ENCODE measurements at regions of chr11 and their contacts with region 1.

Region 1: GRCh38 chr11:128039140-128040021 is 548.0 kb downstream of the ETS1 start:
- DNase-seq: peak; percentile 89
- H3K4me3 Mint-ChIP-seq: peak overlapping the region; percentile 64
- H3K27ac Mint-ChIP-seq: peak overlapping the region; percentile 98
- H3K4me1 Mint-ChIP-seq: peaks cover 48% of the 10 kb centered on the region
- H3K27me3 Mint-ChIP-seq: no peaks in the 10 kb centered on the region

Region 2: GRCh38 chr11:128052912-128053641 is 13.7 kb after region 1 on chr11:
- CTCF ChIA-PET with region 1: interaction called, 44 read pairs
- POLR2A ChIA-PET with region 1: interaction called, 91 read pairs
- DNase-seq: no peak
- H3K4me3 Mint-ChIP-seq: peak overlapping the region; percentile 53
- H3K27ac Mint-ChIP-seq: peak overlapping the region; percentile 83
- H3K4me1 Mint-ChIP-seq: peaks cover 52% of the 10 kb centered on the region
- H3K27me3 Mint-ChIP-seq: no peaks in the 10 kb centered on the region

Region 3: DNA sequence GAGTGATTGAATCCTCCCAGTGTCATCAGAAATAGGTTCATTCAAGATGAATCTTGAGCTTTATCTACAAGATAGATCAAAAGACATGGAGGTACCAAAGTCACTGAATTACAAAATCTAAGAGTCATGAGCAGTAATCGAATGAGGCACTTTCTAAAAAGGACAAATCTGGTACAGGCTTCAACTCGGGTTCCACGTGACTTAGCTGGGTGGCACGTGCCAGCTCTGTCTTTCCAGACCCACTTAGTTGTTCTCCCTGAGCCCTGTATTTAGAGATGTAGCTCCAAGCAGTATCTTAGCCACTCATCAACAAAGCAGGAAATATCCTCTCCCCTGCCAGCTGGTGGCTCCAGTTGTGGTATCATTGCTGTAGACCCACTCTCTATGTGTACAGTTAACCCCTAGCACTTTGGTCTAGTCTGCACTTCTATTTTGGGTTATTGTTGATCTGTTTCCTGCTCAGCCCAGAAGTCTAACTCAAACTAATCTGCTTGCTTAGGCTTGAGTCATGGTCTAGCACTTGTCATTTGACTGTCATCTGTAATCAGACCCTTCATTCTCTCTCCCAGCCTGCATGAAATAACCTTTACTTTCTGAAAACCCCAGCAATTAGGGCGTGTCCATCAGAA is 19.3 kb after region 1 on chr11:
- CTCF ChIA-PET with region 1: interaction called, 44 read pairs
- POLR2A ChIA-PET with region 1: interaction called, 91 read pairs
- DNase-seq: no peak
- H3K4me3 Mint-ChIP-seq: no peak overlapping the region
- H3K27ac Mint-ChIP-seq: no peak overlapping the region
- H3K4me1 Mint-ChIP-seq: peaks cover 13% of the 10 kb centered on the region
- H3K27me3 Mint-ChIP-seq: no peaks in the 10 kb centered on the region

Region 4: DNA sequence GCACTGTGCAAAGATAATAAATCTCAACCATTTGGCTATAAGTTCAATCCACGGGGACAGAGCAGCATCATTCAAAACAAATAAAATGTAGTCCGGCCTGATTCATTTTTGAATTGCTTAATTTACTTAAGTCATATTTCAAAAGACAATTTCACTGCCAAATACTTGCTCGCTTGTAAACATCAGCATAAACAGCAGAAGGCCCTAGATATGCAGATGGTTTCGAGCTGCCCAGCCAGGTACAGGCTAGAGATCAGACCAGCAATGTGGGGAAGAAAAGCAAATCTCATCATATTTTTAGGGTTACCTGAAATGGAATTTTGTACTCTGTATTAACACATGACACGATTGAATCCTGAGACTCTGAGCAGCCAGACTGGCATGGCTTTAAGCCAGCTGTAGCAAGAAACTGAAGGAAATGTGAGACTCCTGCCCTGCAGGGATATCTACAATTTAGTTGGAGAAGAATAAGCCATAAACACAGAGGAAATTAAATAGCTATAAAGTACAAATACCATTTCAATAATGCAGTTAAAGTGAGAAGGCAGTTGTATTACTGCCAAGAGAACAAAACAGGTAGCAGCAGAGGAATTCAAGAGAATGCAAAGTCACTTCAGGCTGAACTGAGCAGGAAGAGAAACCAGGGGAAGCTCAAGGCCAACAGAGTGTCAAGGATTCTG is 107.7 kb after region 1 on chr11:
- CTCF ChIA-PET with region 1: interaction called, 14 read pairs
- POLR2A ChIA-PET with region 1: interaction called, 3 read pairs
- DNase-seq: no peak
- H3K4me3 Mint-ChIP-seq: no peak overlapping the region
- H3K27ac Mint-ChIP-seq: no peak overlapping the region
- H3K4me1 Mint-ChIP-seq: no peaks in the 10 kb centered on the region
- H3K27me3 Mint-ChIP-seq: peaks cover 3% of the 10 kb centered on the region

Region 5: DNA sequence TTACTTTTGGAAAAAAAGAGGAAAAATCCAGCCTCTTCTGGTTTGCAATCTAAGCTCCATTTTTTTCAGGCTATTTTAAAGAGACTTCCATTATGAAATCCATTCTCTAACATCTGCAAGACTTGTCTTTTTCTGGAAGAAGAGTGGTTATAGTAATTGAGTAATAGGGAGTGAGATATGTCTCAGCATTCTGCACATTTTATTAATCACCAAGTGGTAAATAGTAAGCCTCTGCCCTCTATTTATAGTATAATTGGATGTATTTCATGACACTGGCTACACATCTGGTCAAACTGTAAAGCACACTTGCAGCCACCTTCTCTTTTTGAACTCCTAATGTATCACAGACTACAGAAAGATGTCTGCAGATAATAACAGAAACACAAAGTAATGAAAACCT is 156.9 kb after region 1 on chr11:
- CTCF ChIA-PET with region 1: no interaction called
- POLR2A ChIA-PET with region 1: no interaction called
- DNase-seq: no peak
- H3K4me3 Mint-ChIP-seq: no peak overlapping the region
- H3K27ac Mint-ChIP-seq: no peak overlapping the region
- H3K4me1 Mint-ChIP-seq: peaks cover 34% of the 10 kb centered on the region
- H3K27me3 Mint-ChIP-seq: peaks cover 2% of the 10 kb centered on the region

Measured in activated CD4-positive, alpha-beta memory T cell treated with anti-CD3 and anti-CD28 coated beads, Interleukin-2, amount 10 ng/mL, durations not matched to agents 7 days and 5 days (primary cell).